Activated CD4-positive, alpha-beta T cell treated with anti-CD3 and anti-CD28 coated beads for 36 hours (primary cell): ENCODE measurements at regions of chr10 and their contacts with region 1.

Region 1: DNA sequence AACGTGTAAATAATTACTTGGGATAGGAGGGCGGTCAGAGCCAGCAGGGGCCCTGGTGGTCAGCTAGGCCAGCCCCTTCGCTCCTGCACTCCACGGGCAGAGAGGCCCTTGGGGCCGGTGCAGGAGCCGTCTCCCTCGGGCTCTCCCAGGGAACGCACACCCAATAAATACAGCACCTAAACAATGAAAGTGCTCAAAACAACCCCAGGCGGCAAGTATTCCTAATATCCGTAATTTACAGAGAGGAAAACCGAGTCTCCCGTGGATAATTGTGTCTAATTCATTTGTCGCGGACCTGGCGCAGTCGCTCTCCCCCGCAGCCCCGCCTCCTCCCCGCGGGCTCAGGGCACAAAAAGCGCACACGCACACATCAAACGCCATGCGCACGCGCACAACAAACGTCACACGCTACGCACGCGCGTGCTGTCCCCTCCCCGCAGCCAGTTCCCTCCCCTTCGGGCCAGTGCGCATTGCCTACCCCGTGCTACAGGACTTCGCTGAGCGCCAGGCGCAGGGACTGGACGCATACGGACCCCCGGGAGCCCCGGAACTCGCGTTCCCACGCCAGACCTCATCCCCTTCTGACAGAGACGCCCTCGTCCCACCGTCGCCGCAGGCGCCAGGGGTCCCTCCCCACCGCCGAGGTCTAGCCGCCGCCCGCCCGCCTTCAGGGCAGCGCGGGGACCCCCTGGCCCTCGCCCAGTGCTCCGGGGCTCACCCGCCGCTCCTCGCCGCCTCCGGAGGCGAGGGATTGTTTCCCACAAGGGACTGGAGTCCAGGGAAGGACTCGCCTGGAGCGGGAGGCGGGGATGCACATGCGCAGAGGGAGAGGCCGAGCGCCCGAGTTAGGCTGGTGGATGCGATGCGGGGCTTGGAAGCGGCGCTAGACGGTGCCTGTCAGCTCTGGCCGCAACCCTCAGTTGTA is at the start of gene ZNF248:
- DNase-seq: peak; percentile 97
- ATAC-seq: peak; percentile 98
- H3K4me3 Mint-ChIP-seq: peak within 1 kb of the TSS; percentile 84
- H3K27ac Mint-ChIP-seq: peak within 1 kb of the TSS; percentile 78
- H3K4me1 Mint-ChIP-seq: peaks cover 30% of the 10 kb centered on the region
- H3K27me3 Mint-ChIP-seq: no peaks in the 10 kb centered on the region
- total RNA-seq, gene ZNF248: 7.3 to 8.2 TPM

Region 2: DNA sequence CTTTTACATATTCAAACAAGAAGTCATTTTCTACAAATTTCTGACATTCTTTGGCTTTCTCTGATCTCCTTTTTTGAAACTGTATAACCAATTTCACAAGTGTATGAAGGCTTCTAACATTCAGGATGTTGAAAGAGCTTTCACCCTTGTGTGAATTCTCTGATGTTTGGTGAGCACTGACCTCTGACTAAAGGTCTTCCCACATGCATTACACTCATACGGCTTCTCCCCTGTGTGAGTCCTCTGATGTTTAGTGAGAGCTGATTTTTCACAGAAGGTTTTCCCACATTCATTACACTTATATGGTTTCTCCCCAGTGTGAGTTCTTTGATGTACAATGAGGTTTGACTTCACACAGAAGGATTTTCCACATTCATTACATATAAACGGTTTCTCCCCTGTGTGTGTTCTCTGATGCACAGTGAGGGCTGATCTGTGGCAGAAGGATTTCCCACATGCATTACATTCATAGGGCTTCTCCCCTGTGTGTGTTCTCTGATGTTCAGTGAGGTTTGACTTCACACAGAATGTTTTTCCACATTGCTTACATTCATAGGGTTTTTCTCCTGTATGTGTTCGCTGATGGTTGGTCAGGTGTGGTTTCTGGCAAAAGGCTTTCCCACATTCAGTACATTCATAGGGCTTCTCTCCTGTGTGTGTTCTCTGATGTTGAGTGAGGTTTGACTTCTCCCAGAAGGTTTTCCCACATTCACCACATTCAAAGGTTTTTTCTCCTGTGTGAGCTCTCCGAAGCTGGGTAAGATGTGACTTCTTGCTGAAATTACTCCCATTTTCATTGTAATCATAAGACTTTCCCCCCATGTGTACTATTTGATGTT is 25.8 kb before region 1 on chr10:
- CTCF ChIA-PET with region 1: no interaction called
- POLR2A ChIA-PET with region 1: no interaction called
- intact Hi-C with region 1: loop called in 1 of 2 experiments (anchors 2 kb)
- DNase-seq: no peak
- ATAC-seq: no peak
- H3K4me3 Mint-ChIP-seq: no peak overlapping the region
- H3K27ac Mint-ChIP-seq: no peak overlapping the region
- H3K4me1 Mint-ChIP-seq: no peaks in the 10 kb centered on the region
- H3K27me3 Mint-ChIP-seq: no peaks in the 10 kb centered on the region

Region 3: GRCh38 chr10:37896436-37896835 is 38.9 kb after region 1 on chr10:
- CTCF ChIA-PET with region 1: no interaction called
- POLR2A ChIA-PET with region 1: no interaction called
- intact Hi-C with region 1: no loop called
- DNase-seq: no peak
- ATAC-seq: no peak
- H3K4me3 Mint-ChIP-seq: no peak overlapping the region
- H3K27ac Mint-ChIP-seq: no peak overlapping the region
- H3K4me1 Mint-ChIP-seq: no peaks in the 10 kb centered on the region
- H3K27me3 Mint-ChIP-seq: no peaks in the 10 kb centered on the region

Region 4: DNA sequence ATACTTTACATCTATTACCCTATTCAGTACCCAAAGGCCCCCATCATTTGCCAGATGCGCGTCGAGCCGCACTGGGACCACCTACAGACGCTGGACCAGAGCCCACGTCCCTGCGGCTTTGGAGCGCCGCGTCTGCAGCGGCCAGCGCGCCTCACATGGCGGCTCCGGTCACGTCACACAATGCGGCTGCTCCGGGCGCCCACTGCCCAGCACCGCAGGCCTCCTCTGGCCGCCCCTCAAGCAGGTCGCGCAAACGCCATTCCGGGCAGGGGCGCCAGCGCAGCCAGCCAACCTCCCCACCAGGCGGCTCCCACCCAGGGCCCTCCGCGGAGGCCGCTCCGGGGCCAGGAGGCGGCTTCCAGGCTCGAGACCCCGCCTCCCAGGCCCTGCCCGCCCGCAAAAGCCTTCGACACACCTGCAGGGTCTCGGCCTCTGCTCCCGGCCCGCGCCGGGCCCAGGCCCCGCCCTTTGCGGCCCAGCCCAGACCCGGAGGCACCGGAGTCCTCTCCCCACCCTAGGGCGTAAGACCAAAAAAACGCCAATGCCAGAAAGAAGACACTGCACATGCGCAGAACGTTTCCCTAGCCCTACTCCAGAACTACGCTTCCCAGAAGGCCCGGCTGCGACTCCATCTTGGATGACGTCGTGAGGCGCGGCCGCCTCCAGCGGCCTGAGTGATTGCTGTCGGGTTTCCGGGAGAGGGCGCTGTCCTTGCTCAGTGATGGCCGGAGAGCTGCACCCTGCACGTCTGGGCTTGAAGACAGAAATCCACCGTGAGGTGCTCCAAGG is 118.7 kb after region 1 on chr10 and contains the start of gene ZNF25:
- CTCF ChIA-PET with region 1: interaction called, 4 read pairs
- POLR2A ChIA-PET with region 1: no interaction called
- intact Hi-C with region 1: loop called (anchors 1 kb)
- DNase-seq: peak; percentile 99
- ATAC-seq: peak; percentile 92
- H3K4me3 Mint-ChIP-seq: peak within 1 kb of the TSS; percentile 88
- H3K27ac Mint-ChIP-seq: peak within 1 kb of the TSS; percentile 97
- H3K4me1 Mint-ChIP-seq: peaks cover 12% of the 10 kb centered on the region
- H3K27me3 Mint-ChIP-seq: no peaks in the 10 kb centered on the region
- total RNA-seq, gene ZNF25: 7.3 to 7.5 TPM

Region 5: DNA sequence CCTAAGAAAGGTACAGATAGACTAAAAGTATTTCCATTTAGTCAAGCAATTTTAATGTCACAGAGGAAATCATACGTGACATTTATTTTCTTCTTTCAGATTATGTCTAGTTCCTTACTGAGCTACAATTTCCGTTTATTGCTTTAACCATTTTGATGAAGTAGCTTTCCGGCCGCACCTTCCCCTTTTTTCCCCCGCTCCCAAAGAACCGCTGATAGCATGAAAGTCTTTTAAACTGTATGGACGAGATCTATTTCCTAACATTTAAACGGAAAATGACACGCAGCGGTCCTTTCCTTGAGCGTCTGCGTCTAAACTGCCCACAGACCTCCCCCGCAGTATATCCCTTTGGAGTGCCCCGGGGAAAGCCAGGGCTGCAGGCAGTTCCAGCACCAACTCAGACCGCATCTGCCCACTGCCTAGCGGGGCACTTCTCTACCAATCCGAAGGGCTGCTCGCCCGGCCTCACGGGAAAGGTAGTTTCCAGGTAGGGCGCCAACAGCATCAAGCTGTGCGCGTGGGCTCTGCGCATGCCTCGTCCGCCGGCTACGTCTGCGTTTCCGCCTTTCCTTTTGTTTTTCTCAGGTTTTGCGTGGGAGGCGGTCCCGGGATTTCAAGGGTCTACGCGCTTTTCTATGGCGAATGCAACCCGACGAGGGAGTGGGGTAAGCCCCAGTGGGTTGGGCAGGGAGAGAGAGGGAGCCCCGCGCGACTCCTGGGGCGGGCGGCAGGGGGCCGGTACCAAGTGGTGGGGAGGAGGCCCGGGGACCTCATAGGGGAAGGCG is 152.8 kb after region 1 on chr10 and contains the start of gene ZNF33A:
- CTCF ChIA-PET with region 1: no interaction called
- POLR2A ChIA-PET with region 1: no interaction called
- intact Hi-C with region 1: loop called (anchors 1 to 2 kb)
- DNase-seq: peak; percentile 94
- ATAC-seq: peak; percentile 88
- H3K4me3 Mint-ChIP-seq: peak within 1 kb of the TSS; percentile 85
- H3K27ac Mint-ChIP-seq: peak within 1 kb of the TSS; percentile 98
- H3K4me1 Mint-ChIP-seq: peaks cover 31% of the 10 kb centered on the region
- H3K27me3 Mint-ChIP-seq: no peaks in the 10 kb centered on the region
- total RNA-seq, gene ZNF33A: 18.7 to 20.0 TPM

Region 6: DNA sequence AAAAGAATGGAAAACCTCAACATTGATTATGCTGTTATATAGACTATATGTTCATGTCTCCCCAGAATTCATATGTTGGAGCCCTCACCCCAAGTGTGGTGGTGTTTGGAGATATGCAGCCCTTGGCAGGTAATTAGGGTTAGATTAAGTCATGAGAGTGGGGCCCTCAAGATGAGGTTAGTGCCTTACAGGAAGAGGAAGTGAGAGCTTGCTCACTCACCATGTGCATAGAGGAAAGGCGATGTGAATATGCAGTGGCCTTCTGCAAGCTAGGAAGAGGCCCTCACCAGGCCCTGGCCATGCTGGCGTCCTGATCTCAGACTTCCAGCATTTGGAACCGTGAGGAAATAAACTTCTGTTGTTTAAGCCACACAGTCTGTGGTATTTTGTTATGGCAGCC is 167.7 kb after region 1 on chr10:
- CTCF ChIA-PET with region 1: no interaction called
- POLR2A ChIA-PET with region 1: no interaction called
- intact Hi-C with region 1: no loop called
- DNase-seq: no peak
- ATAC-seq: peak; percentile 64
- H3K4me3 Mint-ChIP-seq: no peak overlapping the region
- H3K27ac Mint-ChIP-seq: peak overlapping the region; percentile 80
- H3K4me1 Mint-ChIP-seq: peaks cover 30% of the 10 kb centered on the region
- H3K27me3 Mint-ChIP-seq: no peaks in the 10 kb centered on the region

Region 7: DNA sequence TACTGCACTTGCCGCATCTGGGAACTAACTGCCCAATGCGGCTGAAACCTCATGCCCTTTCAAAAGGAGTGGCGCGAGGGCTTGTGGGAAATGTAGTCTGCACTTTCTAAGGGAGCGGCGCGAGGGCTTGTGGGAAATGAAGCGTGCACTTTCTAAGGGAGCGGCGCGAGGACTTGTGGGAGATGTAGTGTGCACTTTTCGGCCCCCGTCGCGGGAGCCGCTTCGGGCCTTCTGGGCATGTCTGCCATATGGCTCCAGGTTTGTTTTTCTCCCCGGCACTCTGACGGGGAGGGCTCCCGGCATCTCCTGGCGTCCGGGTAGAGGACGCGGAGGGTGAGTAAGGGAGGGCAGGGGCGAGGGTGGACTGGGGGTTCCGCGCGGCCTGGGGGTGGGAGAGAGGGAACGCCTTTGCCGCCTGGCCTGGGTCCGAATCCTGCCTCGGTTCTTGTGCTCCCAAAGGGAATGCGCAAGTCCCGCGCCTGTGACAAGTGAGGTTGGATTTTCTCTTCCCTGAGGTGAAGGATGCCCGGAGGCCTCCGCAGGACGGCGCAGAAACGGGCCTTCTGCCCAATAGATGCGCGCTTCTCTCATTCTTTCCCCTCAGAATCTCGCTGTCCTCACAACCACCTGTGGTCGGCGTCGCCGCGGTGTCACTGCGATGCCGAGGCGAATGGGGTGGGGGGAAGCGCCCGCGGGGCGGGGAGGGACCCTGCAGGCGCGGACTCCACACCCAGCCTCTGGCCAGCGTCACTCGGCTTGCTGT is 236.8 kb after region 1 on chr10 and contains the start of gene ZNF37A:
- CTCF ChIA-PET with region 1: no interaction called
- POLR2A ChIA-PET with region 1: no interaction called
- intact Hi-C with region 1: loop called (anchors 1 to 5 kb)
- DNase-seq: peak; percentile 94
- ATAC-seq: peak; percentile 98
- H3K4me3 Mint-ChIP-seq: peak within 1 kb of the TSS; percentile 85
- H3K27ac Mint-ChIP-seq: peak within 1 kb of the TSS; percentile 90
- H3K4me1 Mint-ChIP-seq: peaks cover 31% of the 10 kb centered on the region
- H3K27me3 Mint-ChIP-seq: no peaks in the 10 kb centered on the region
- total RNA-seq, gene ZNF37A: 24.1 to 25.5 TPM